Mammary epithelial cell (primary cell): ENCODE measurements at regions of chr20 and their contacts with region 1.

Region 1: DNA sequence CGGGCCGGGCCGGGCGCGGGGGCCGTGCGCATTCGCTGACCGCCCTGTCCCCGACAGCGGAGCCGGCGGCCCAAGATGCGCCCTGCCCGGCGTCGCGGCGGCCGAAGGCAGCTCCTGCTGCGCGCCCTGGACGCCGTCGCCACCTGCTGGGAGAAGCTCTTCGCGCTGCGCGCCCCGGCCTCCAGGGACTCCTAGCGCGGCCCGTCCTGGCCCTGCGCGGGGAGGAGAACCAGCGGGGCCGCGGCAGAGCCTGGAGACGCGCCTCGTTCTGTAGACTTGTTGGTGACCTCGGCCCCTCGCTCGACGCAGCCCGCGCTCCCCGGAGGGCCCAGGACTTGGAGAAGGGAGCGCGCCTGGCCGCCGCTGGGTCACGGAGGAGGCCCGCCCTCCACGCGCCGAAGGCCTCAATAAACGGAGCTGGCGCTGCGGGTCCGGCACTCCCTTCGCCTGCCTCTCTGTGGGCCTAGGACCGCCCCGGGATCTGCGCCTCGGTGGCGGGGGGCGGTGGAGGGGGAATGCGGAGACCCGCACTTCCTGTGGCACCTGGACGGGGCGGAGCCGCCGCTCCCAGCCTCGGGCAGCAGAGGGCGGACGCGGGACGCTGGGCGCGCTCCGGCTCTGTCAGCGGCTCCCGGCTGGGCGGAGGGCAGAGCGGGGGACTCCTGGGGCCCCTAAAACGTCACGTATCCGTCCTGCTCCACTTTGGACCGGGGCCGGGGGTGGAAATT is 2.7 kb downstream of the C20orf204 start:
- DNase-seq: peak; percentile 80
- H3K4me3 ChIP-seq: peak overlapping the region; percentile 4 to 55 (median 44)
- H3K27ac ChIP-seq: no peak overlapping the region
- H3K4me1 ChIP-seq: peaks cover 10% of the 10 kb centered on the region
- H3K27me3 ChIP-seq: no peaks in the 10 kb centered on the region
- CTCF ChIP-seq: peak; percentile 36 to 78

Region 2: DNA sequence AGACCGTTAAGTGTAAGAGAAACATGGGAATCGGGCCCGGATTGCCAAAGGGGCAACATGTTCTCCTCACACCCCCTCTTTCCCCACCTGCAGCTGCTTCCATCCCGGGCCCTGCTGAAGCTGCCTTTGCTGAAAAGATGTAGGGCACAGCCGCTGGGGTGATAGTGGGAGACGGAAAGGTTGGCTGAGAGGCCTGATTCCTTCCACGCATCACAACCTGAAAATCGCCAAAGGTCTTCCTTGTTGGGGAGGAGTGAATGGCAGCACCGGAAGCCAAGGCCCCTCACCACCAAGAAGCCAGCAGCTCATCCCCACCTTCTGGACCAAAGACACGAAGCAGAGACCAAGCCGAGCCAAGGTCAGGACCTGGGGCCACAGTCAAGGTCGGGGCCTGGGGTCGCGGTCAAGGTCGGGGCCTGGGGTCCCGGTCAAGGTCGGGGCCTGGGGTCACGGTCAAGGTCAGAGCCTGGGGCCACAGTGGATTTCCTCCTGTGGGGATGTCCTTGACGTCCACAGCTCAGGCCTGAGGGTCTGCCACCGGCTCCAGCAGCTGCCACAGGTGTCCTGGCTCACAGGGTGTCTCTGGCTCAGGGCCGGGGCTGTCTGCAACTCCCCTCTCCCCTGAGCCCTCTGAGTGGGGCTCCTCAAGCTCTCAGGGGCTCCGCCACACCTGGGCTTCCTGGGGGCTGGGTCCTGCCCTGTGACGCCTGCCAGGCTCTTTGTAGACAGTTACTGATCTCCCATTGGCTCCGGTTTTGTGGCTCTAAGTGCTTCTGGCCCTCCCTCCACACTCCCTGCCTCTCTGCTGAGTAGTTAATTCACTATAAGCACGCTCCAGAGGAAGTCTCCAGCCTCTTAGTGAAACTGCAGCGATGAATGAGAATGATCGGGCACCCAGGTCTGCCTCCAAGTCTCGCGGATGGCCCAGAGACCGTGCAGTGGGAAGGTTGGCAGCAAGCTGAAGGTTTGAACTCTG is 672.1 kb before region 1 on chr20:
- CTCF ChIA-PET with region 1: no interaction called
- dilution Hi-C with region 1: no loop called
- in situ Hi-C with region 1: no loop called
- intact Hi-C with region 1: no loop called
- DNase-seq: no peak
- H3K4me3 ChIP-seq: no peak overlapping the region
- H3K27ac ChIP-seq: no peak overlapping the region
- H3K4me1 ChIP-seq: no peaks in the 10 kb centered on the region
- H3K27me3 ChIP-seq: peaks cover 9% of the 10 kb centered on the region
- CTCF ChIP-seq: no peak

Region 3: GRCh38 chr20:63482856-63483695 is 555.7 kb before region 1 on chr20:
- CTCF ChIA-PET with region 1: no interaction called
- dilution Hi-C with region 1: no loop called
- in situ Hi-C with region 1: no loop called
- intact Hi-C with region 1: no loop called
- DNase-seq: peak; percentile 24
- H3K4me3 ChIP-seq: no peak overlapping the region
- H3K27ac ChIP-seq: no peak overlapping the region
- H3K4me1 ChIP-seq: peaks cover 8% of the 10 kb centered on the region
- H3K27me3 ChIP-seq: peaks cover 13% of the 10 kb centered on the region
- CTCF ChIP-seq: no peak

Region 4: DNA sequence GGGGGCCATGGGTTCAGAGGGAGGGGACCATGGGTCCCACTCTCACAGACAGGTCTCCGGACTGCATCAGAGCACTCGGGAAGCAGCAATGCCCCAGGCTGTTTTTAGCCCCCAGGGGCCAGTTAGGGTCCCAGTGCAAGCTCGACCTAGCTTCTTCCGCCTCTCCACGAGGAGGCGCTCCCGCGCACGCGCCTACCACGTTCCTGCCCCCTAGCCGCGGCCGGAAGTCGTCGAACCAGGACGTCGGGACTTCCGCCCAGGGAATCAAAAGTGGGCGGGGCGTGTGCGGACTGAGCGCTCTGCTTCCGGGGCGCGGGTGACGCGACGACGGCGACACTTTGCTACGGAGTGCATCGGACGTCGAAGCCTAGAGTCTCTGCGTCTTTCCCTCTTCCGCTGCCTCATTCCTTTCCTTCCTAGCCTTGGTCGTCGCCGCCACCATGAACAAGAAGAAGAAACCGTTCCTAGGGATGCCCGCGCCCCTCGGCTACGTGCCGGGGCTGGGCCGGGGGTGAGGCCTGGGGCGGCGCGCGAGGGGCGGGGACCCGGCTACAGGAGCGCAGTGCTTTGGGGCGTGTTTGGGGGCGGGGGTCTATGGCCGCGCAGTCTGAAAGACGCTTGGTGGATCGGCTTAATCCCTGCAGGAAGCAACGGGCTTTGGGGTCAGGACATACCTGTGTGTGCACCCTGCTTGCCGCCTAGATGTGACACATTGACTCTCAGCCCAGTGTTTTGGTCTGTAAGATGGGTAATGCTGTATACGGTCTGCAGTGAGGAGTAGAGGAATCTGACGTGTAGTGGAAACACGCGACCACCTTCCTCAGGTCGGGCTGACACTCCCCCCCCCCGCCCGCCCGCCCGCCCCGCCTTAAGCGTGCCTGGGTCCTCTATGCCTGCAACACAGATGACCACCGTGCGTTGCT is 57.7 kb before region 1 on chr20 and contains the start of gene PRPF6:
- CTCF ChIA-PET with region 1: interaction called, 7 read pairs
- dilution Hi-C with region 1: no loop called
- in situ Hi-C with region 1: no loop called
- intact Hi-C with region 1: loop called (anchors 2 kb)
- DNase-seq: peak; percentile 90
- H3K4me3 ChIP-seq: peak within 1 kb of the TSS; percentile 71 to 94 (median 87)
- H3K27ac ChIP-seq: peak within 1 kb of the TSS; percentile 73
- H3K4me1 ChIP-seq: peaks cover 38% of the 10 kb centered on the region
- H3K27me3 ChIP-seq: no peaks in the 10 kb centered on the region
- CTCF ChIP-seq: peak; percentile 53 to 93
- total RNA-seq, gene PRPF6: 33.5 to 56.9 TPM